ENCODE measurements at regions of chr6 and their contacts with region 1.

Region 1: DNA sequence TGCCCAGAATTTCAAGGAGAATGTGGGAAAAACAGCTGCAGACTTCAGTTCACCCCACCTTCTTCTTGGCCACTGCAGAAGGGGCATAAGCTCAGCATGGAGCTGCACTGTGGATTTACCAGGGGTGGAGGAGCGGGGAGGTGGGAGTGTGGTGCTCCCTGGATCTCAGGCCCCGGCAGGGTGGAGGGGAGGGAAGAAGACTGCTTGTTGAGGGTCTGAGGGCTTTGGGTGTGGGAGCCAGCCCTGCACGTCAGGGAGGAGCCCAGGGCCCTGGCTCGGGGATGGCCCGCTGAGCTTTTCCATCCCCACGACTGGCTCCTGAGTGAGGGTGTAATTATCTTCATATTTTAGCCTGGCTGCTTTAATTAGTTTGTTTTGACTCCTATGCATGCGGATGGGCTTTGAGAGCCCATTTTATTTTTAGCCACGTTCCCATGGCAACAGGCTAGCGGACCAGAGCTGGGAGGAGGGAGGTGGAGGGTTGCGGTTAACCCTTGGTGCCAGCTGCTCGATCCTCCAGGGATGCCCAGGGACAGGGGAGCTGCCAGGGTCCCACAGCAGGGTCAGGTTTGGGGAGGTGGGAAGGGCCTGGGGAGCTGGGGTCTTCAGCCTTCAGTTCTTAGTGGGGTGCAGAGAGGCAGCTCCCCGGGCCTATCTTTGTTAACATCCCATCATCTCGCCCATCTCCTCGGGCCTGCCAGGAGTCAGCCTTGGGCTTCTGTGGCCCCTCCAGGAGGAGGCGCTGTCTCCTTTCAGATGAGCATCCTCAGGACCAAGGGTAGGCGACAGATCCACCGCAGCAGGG is 68.2 kb downstream of the RAB44 start:
- DNase-seq: peak; percentile 68 to 71
- ATAC-seq: peak; percentile 92 to 98
- H3K4me3 ChIP-seq: no peak overlapping the region
- H3K27ac ChIP-seq: no peak overlapping the region
- H3K4me1 ChIP-seq: no peaks in the 10 kb centered on the region
- CTCF ChIP-seq: peak; percentile 68
- EP300 ChIP-seq: no peak
- POLR2A ChIP-seq: no peak
- RAD21 ChIP-seq: peak; percentile 80 to 91

Region 2: DNA sequence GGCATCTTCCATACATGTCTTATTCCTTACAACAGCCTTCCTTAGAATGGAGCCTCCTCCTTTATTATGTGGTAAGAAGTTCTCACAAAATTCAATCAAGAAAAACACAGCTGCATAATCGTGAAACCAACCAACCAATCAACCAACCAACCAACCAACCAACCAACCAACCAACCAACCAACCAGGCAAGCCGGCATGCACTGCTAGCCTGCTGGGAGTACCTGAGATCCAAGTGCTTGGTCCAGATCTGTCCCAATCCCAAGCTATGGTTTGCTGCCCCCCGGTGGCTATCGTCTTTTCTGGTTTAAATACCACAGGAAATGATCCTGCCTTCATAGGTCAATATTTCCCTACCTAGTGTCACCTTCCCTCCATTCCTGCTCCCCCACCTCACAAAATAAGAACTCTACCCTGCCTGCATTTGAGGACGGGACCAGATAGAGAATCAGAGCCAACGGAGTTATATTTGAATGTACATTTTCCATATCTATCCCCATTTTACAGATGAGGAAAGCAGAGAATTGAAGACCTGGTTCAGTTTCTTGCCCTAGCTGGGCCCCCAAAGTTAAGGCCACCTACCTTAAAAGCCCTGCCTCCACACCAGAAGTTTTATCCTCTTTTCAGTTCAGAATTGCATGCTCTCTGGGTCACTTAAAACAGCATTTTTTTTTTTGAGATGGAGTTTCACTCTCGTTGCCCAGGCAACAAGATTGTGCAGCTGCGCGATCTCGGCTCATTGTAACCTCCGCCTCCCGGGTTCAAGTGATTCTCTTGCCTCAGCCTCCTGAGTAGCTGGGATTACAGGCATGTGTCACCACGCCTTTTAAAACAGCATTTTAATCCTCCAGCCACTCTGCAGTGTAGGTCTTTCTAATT is 41.0 kb before region 1 on chr6:
- CTCF ChIA-PET with region 1: interaction called, 26 read pairs
- POLR2A ChIA-PET with region 1: no interaction called
- DNase-seq: peak; percentile 70 to 72
- ATAC-seq: peak; percentile 78 to 92
- H3K4me3 ChIP-seq: no peak overlapping the region
- H3K27ac ChIP-seq: no peak overlapping the region
- H3K4me1 ChIP-seq: no peaks in the 10 kb centered on the region
- CTCF ChIP-seq: peak; percentile 68
- EP300 ChIP-seq: no peak
- POLR2A ChIP-seq: no peak
- RAD21 ChIP-seq: peak; percentile 76 to 82

Region 3: GRCh38 chr6:36793913-36794712 is 28.3 kb after region 1 on chr6:
- CTCF ChIA-PET with region 1: interaction called, 22 read pairs
- POLR2A ChIA-PET with region 1: no interaction called
- DNase-seq: no peak
- ATAC-seq: no peak
- H3K4me3 ChIP-seq: no peak overlapping the region
- H3K27ac ChIP-seq: no peak overlapping the region
- H3K4me1 ChIP-seq: no peaks in the 10 kb centered on the region
- CTCF ChIP-seq: no peak
- EP300 ChIP-seq: no peak
- POLR2A ChIP-seq: no peak
- RAD21 ChIP-seq: no peak

Region 4: DNA sequence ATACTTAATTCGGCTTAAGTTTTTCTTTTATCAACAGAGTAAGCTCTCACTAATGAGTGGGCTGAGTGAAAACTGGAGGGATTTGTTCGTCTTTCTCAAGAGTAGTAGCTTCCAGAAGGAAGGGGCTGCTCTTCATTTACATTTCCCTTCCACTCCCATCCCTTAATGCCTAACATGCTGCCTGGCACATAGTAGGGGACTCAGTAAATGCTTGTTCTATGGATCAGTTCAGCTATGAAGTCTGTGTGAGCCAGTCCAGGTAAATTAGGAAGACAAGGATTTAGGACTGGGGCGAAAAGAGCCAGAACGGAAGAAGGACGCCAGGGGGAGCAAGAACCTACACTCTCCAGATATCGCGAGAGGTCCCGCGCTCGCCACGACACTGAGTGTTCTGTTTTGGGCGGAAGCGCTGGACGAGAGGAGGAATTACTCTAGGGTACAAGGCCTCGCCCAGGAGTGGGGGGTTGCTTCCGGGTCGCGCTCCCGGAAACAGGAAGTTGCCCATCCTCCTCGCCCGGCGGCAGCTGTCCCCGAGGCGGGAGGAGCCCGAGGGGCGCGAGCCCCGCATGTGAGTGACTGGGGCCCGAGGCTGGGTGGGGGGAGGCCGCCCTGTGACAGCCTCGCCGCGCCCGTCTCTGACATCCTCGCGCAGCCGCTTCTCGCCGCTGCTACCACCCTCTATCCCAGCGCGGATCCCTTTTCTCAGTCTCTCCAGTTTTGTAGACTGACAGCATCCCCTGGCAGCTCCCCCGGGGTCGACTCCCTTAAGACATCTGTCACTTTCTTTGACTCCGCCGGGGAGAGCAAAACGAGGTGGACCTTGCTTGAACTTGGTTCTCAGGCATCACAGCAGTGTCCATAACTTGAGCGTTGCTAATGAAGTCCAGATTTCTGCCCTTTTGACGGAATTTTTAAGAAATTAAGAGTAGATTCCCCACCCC is 119.9 kb after region 1 on chr6 and contains the start of gene C6orf89:
- CTCF ChIA-PET with region 1: interaction called, 10 read pairs
- POLR2A ChIA-PET with region 1: no interaction called
- DNase-seq: peak; percentile 75 to 96
- ATAC-seq: peak; percentile 100
- H3K4me3 ChIP-seq: peak within 1 kb of the TSS; percentile 81
- H3K27ac ChIP-seq: peak within 1 kb of the TSS; percentile 83 to 89
- H3K4me1 ChIP-seq: peaks cover 5% of the 10 kb centered on the region; the same call in 1 of the 3 replicates
- CTCF ChIP-seq: peak; percentile 64
- EP300 ChIP-seq: no peak
- POLR2A ChIP-seq: peak; percentile 63
- RAD21 ChIP-seq: peak; percentile 26 to 55
- polyA plus RNA-seq, gene C6orf89: 27.0 and 32.5 TPM in 2 replicates

Region 5: DNA sequence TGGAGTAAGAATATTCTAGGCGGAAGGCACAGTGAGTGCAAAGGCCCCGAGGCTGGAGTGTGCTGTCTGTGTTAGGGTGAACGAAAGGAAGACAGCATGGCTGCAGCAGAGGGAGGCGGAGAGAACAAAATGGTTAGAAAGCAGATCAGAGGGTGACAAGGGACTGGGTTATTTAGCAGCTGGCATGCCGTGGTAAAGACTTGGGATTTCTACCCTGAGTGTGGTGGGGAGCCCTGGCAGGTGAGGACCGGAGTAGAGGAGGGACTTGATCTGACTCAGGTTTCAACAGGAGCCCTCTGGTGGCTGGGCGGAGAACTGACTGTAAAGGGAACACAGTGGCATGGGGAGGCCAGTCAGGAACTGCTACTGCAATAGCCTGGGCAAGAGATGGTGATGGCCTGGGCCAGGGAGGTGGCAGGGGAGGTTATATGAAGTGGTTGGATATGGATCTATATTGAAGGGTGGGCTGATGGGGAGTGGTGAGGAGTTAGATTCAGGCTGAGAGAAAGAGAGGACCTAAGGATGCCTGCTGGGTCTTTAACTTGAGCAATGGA is 442.2 kb after region 1 on chr6:
- CTCF ChIA-PET with region 1: interaction called, 20 read pairs
- POLR2A ChIA-PET with region 1: no interaction called
- DNase-seq: peak; percentile 76 to 83
- ATAC-seq: peak; percentile 84 to 91
- H3K4me3 ChIP-seq: no peak overlapping the region
- H3K27ac ChIP-seq: no peak overlapping the region
- H3K4me1 ChIP-seq: peaks cover 29% of the 10 kb centered on the region
- CTCF ChIP-seq: peak; percentile 63
- EP300 ChIP-seq: no peak
- POLR2A ChIP-seq: no peak
- RAD21 ChIP-seq: peak; percentile 61 to 67

Measured in A549 (cell line).